Right lobe of liver (tissue), 6 donors: ENCODE measurements at regions of chr12 and their contacts with region 1.

Region 1: DNA sequence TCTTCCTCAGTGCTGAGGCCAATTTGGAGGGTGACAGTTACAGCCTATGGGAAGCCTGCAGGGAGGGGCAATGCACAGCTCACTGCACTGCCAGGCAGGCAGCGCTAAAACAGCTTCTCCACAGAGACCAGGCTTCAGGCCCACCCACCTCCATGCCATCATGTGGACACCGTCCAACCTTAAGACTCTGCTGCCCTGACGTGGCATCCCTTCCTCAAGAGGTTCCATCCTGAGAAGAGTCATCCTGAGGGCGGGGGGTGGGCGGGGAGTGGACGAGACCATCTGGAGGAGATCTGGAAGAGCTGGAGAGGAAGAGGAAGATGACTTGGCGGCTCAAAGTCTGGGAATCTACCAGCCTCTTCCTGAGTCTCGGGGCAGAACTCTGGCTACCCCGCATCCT is 8.4 kb upstream of the ACVRL1 start:
- DNase-seq: no peak
- ATAC-seq: peak in 1 of 4 donors; percentile 14
- H3K4me3 ChIP-seq: no peak overlapping the region
- H3K27ac ChIP-seq: no peak overlapping the region
- H3K4me1 ChIP-seq: peaks cover 0 to 6% (median 0%) of the 10 kb centered on the region in 4 donors
- H3K27me3 ChIP-seq: no peaks in the 10 kb centered on the region
- CTCF ChIP-seq: no peak
- POLR2A ChIP-seq: no peak

Region 2: GRCh38 chr12:51980051-51980808 is 81.3 kb after region 1 on chr12:
- intact Hi-C with region 1: loop called (anchors 5 kb)
- DNase-seq: peak; percentile 65 to 74 (median 70)
- ATAC-seq: peak; percentile 78 to 92 (median 86)
- H3K4me3 ChIP-seq: no peak overlapping the region
- H3K27ac ChIP-seq: no peak overlapping the region
- H3K4me1 ChIP-seq: peaks cover 0 to 39% (median 17%) of the 10 kb centered on the region in 4 donors
- H3K27me3 ChIP-seq: no peaks in the 10 kb centered on the region
- CTCF ChIP-seq: peak; percentile 97 to 100 (median 99)
- POLR2A ChIP-seq: no peak